AG04449 (cell line): ENCODE measurements at regions of chr4 and their contacts with region 1.

Region 1: GRCh38 chr4:16875487-16875886 is 23.0 kb downstream of the LDB2 start:
- DNase-seq: peak; percentile 92
- H3K4me3 ChIP-seq: no peak overlapping the region
- CTCF ChIP-seq: no peak

Region 2: DNA sequence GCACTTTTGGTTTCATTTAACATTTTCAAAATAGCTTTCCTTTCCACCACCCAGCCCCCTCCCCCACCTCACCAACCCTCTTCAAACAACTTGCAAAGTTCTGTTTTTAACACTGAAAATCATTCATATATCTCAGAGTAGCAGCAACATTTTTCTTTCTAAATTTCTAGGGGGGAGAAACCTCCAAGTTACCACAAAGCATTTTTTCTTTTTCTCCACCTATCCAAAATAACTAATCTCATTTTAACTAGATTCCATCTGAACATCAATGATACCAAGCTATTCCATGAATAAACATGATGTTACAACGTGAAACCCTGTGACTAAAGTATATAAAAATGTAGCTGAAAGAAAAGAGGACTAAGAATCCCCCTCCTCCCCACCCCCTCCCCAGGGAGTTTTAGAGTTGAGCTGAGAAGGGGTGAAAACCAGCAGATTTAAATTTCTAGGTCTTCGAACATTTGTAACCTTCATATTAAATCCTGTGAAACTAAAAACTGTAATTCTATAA is 17.7 kb after region 1 on chr4:
- CTCF ChIA-PET with region 1: interaction called, 10 read pairs
- POLR2A ChIA-PET with region 1: interaction called, 3 read pairs
- DNase-seq: no peak
- H3K4me3 ChIP-seq: peak overlapping the region; percentile 24
- CTCF ChIP-seq: no peak

Region 3: DNA sequence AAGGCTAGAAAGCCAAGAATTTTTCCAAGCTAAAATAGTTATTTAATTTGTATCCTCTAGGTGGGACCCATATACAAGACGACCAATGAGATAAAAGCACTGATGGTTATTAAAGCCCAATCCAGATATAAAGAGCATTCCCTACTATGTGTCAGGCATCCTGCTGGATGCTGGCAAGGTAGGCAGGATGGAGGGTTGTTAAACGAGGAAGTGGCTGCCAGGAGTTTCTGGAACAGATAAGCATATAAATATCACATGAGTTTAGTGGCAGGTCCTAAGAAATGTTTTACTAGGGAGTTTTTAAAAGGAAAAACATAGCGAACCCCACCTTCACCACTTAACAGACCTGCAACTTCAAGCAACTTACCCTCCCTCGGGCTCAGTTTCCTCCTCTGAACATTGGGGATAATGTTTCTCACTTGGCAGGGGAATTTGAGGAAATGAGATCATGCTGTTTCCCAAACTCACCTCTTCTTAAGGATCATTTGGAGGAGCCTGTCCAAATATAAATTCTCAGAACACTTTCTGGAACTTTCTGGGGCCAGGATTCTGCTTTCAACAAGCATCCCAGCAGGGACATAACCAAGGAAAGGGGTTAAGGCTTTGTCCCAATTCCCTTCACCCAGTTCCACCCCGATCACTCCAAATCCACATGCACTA is 117.2 kb after region 1 on chr4:
- CTCF ChIA-PET with region 1: no interaction called
- POLR2A ChIA-PET with region 1: no interaction called
- DNase-seq: no peak
- H3K4me3 ChIP-seq: no peak overlapping the region
- CTCF ChIP-seq: no peak

Region 4: GRCh38 chr4:17103231-17103630 is 227.7 kb after region 1 on chr4:
- CTCF ChIA-PET with region 1: no interaction called
- POLR2A ChIA-PET with region 1: no interaction called
- DNase-seq: peak; percentile 90
- H3K4me3 ChIP-seq: no peak overlapping the region
- CTCF ChIP-seq: no peak